Left cardiac atrium (tissue), 4 donors: ENCODE measurements at regions of chr2 and their contacts with region 1.

Region 1: GRCh38 chr2:237858294-237859081 is 935 bp upstream of the RAMP1 start:
- DNase-seq: peak; percentile 67
- ATAC-seq: peak; percentile 82 to 86

Region 2: DNA sequence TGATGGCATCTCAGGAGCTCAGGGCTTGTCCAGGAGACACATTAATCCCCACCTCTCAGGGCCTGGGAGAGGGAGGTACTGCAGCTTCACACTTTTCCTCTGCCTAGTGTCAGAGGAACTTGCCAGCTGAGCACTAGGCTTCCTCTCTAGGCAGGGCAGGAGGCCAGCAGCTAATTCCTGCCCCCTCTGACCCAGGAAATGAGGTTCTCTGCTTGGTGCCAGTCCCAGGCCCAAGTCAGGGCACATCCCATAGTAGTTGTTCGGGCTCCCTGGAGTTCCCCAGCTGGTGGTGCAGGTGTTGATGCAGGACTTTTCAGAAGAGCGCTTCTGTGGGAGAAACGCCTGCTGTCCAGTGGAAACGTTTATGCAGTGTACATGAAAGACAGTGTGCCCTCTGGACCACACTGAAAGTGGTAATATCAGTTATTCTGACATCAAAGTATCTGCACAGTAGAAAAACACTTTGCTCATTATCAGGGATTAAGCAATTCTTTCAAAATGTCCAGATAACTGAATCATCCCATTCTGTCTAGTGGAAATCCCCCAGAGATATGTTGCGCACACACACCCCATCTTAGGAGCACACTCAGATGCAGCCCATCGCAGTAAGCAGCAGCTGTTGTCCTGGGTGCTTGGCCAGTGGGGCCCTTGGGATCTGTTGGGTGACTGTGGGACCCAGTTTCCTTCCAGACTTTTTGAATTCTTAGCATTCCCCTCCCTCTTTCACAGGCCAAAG is 184.5 kb after region 1 on chr2:
- intact Hi-C with region 1: loop called in 1 of 2 experiments (anchors 10 kb)
- DNase-seq: no peak
- ATAC-seq: peak; percentile 72 to 75

Region 3: GRCh38 chr2:238139196-238140039 is 280.9 kb after region 1 on chr2:
- intact Hi-C with region 1: loop called in 1 of 2 experiments (anchors 5 kb)
- DNase-seq: peak; percentile 57
- ATAC-seq: peak; percentile 55 to 56

Region 4: DNA sequence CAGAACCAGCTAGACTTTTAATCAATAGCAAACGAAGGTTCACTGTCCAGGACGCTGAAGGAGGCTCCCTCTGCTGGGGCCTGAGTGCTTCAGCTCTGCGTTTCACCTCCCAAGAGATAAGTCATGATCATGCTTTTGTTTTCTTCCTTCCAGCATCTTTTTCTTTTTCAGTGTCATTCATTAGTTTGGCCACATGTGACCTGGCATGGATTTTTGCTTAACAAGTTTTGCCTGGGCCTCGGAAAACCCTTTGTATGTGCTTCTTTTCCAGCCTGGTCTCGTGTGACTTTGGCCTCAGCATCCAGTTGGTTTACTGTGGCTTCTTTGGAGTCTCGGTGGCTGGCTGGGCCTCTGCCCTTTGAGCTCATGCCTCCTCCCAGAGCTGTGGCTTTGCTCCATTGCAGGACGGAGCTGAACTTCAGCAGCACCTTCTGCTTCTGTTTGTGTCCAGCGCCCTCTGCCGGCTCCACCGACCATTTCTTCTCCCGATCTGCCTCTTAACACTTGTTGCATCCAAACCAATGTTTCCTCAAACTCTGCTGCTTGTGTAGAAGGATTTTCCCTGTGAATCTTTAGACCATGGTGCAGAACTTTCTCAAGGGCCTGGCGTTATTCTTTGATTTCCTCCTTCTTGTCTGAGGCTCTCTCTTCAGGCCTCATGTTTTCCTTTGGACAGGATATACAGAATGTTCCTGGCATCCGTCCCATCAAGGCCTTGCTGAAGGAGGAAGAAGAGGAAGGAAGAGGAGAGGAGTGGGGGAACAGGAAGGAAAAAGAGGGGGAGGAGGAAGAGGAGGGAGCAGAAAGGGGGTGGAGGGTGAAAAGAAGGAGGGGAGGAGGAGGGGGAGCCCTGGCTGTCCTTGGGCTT is 404.9 kb after region 1 on chr2:
- intact Hi-C with region 1: loop called (anchors 5 kb)
- DNase-seq: peak; percentile 92
- ATAC-seq: peak; percentile 82 to 86